ENCODE measurements at regions of chr6 and their contacts with region 1.

Region 1: GRCh38 chr6:35342258-35343091 is at the start of gene PPARD:
- DNase-seq: peak; percentile 98 to 100 (median 98)
- ATAC-seq: peak; percentile 99 to 100 (median 100)
- H3K4me3 ChIP-seq: peak within 1 kb of the TSS; percentile 64 to 97 (median 94)
- H3K27ac ChIP-seq: peak within 1 kb of the TSS; percentile 62 to 94 (median 89)
- H3K4me1 ChIP-seq: peaks cover 0 to 30% (median 19%) of the 10 kb centered on the region in 12 donors
- H3K27me3 ChIP-seq: no peaks in the 10 kb centered on the region
- CTCF ChIP-seq: peak; percentile 95 to 99 (median 98)
- POLR2A ChIP-seq: peak; percentile 87 to 91
- total RNA-seq, gene PPARD: 10.0 to 22.0 (median 13.4) TPM

Region 2: GRCh38 chr6:35071347-35071994 is 271.0 kb before region 1 on chr6:
- intact Hi-C with region 1: no loop called
- DNase-seq: peak in 2 of 5 donors; percentile 2 to 18
- ATAC-seq: no peak
- H3K4me3 ChIP-seq: no peak overlapping the region
- H3K27ac ChIP-seq: no peak overlapping the region
- H3K4me1 ChIP-seq: peaks cover 0 to 27% (median 2%) of the 10 kb centered on the region in 12 donors
- H3K27me3 ChIP-seq: no peaks in the 10 kb centered on the region
- CTCF ChIP-seq: no peak
- POLR2A ChIP-seq: no peak

Region 3: DNA sequence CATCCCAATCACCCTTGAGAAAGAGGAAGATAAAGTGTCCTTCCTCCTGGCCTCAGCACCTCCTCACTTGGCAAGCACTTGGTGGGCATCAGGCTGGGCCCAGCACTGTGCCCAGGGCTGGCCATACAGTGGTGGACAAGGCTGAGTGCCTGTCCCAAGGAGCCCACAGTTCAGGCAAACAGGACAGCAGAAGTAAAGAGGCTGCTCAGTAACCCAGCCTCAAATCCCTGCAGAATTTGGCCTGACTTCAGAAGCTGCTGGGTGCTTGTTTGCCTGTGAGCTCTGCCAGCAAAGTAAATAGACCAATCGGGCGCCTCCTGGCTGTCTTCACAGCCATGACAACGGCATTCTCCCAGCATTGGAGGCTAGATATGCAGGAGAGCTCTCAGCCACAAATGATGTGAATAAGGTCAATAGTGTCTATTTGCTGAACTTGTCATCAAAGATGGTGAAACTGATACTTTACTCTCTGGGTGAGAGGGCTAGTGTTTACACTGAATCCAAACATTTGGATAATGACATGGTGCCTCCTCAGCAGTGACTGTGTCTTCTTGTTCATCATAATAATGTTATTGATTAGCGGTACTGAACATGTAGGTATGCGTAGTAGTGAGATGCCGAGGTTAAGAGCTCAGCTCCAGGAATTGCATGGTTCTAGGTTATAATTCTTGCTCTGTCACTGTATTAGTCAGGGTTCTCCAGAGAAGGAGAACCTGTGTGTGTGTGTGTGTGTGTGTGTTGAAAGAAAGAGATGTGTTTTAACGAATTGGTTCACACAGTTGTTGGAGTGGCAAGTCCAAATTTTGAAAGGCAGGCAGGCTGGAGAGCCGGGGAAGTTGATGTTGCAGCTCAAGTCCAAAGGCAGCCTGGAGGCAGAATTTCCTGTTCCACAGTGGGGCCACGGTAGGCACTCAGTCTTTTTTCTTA is 72.9 kb after region 1 on chr6:
- intact Hi-C with region 1: loop called in 9 of 10 experiments (anchors 1 to 10 kb)
- DNase-seq: peak in 4 of 5 donors; percentile 68 to 77 (median 74)
- ATAC-seq: peak; percentile 80 to 93 (median 88)
- H3K4me3 ChIP-seq: no peak overlapping the region
- H3K27ac ChIP-seq: peak overlapping the region in 1 of 12 donors; percentile 19
- H3K4me1 ChIP-seq: peaks cover 0 to 30% (median 10%) of the 10 kb centered on the region in 12 donors
- H3K27me3 ChIP-seq: no peaks in the 10 kb centered on the region
- CTCF ChIP-seq: peak; percentile 26 to 74 (median 58)
- POLR2A ChIP-seq: no peak

Region 4: GRCh38 chr6:35452186-35453090 is 110.0 kb after region 1 on chr6 and contains the start of gene FANCE:
- intact Hi-C with region 1: loop called (anchors 1 to 2 kb)
- DNase-seq: peak; percentile 94 to 98 (median 95)
- ATAC-seq: peak; percentile 89 to 96 (median 96)
- H3K4me3 ChIP-seq: peak within 1 kb of the TSS; percentile 45 to 88 (median 68)
- H3K27ac ChIP-seq: peak within 1 kb of the TSS in 11 of 12 donors; percentile 67 to 84 (median 77)
- H3K4me1 ChIP-seq: peaks cover 2 to 38% (median 25%) of the 10 kb centered on the region in 12 donors
- H3K27me3 ChIP-seq: no peaks in the 10 kb centered on the region
- CTCF ChIP-seq: peak in 2 of 12 donors; percentile 5 to 9
- POLR2A ChIP-seq: peak in 1 of 2 donors; percentile 48
- total RNA-seq, gene FANCE: 2.1 to 4.6 (median 3.8) TPM

Region 5: DNA sequence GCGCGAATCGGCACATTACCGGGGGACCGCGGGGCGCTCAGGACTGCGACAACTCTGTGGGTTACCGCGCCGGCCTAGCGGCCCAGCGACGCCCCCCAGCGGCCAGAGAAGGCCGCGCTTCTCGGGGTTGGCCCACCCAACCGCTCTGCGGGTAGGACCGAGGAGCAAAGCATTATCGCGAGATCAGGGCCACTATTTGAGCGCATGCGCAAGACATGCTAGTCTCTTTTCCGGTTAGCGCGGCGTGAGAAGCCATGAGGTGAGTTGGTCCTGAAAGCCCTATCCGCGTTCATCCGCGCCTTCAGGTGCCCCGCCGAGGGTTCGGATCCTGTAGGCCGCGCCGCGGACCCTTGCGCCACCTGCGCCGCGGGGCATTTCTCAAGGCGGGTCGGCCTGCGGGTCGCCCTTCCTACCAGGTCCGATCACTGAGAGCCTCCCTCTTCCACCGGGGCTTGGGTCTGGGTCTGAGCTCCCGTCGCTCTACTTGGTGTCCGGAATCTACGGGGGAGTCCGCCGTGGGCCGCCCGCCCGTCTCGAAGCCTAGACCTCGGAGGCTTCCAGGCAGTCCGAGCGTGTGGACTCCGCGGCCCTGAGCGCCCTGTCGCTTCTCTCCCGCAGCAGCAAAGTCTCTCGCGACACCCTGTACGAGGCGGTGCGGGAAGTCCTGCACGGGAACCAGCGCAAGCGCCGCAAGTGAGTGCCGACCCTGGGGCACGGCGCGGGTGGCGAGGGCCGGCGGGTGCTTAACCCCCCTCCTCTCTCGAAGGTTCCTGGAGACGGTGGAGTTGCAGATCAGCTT is 125.9 kb after region 1 on chr6 and contains the start of gene RPL10A:
- intact Hi-C with region 1: loop called in 7 of 10 experiments (anchors 1 to 5 kb)
- DNase-seq: peak; percentile 95 to 97 (median 97)
- ATAC-seq: peak; percentile 86 to 92 (median 88)
- H3K4me3 ChIP-seq: peak within 1 kb of the TSS; percentile 61 to 98 (median 72)
- H3K27ac ChIP-seq: peak within 1 kb of the TSS; percentile 62 to 94 (median 88)
- H3K4me1 ChIP-seq: peaks cover 3 to 40% (median 23%) of the 10 kb centered on the region in 12 donors
- H3K27me3 ChIP-seq: no peaks in the 10 kb centered on the region
- CTCF ChIP-seq: peak; percentile 92 to 99 (median 95)
- POLR2A ChIP-seq: peak in 1 of 2 donors; percentile 92
- total RNA-seq, gene RPL10A: 472 to 700 (median 532) TPM

Region 6: DNA sequence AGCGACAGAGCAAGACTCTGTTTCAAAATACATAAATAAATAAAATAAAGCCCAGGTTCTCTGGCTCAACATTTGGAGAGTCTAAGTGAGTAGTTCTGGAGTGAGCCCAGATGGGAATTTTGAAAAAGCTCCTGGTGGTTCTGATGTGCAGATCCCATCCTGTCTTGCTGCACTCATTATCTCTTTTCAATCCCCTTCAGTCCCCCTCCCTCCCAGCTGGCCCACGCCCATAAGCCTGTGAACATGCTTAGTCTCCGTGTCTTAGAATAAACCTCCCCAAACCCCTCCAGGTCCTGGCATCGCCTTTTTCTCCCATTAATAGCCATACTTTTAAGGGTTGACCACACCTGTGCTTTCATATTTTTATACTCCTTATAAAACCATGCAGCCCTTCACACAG is 189.7 kb after region 1 on chr6:
- intact Hi-C with region 1: no loop called
- DNase-seq: no peak
- ATAC-seq: no peak
- H3K4me3 ChIP-seq: no peak overlapping the region
- H3K27ac ChIP-seq: no peak overlapping the region
- H3K4me1 ChIP-seq: no peaks in the 10 kb centered on the region
- H3K27me3 ChIP-seq: peaks cover 0 to 7% (median 0%) of the 10 kb centered on the region in 9 donors
- CTCF ChIP-seq: no peak
- POLR2A ChIP-seq: no peak